ENCODE measurements at regions of chr12 and their contacts with region 1.

Region 1: DNA sequence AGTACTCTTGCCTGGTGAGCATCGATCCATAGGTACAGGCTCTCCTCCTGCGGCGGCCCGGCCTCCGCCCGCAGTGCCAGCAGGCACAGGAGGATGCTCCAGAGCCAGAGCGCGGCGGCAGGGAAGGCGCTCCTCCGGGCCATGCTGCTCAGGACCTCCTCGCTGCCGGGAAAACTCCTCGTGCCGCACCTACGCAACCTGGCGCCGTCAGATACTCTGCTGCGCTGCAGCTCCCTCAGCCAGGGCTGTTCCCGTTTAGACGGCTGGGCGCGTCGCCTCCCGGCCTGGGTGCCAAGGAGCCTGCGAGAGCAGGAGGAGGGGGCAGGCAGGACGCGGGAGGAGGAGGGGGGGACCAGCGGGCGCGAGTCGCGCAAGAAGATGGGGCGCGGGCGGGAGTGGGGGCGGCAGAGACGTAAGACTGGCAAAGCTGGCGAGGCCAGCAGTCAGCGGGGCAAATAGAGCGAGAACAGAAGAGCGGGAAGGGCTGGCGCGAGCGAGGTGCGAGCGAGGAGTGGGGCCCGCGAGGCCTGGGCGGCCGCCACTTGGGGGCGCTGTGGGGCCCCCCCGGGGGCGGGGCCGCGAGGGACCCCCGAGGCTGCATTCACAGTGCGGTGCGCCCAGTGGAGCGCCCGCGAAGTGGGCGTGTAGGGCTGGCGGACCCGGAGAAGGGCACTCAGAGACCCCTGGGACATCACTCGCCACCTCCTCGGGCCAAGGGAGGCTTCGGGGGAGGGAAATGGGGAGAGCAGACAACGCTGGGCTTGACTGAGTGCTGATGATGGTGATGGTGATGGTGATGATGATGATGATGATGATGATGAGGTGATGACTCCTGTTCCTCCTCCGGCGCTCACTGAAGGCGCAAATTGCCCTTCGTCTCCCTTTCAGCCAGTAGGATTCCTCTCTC is at the start of gene WIF1:
- DNase-seq: no peak
- H3K4me3 ChIP-seq: peak within 1 kb of the TSS in 3 of 4 donors; percentile 22 to 62 (median 41)
- H3K27ac ChIP-seq: no peak within 1 kb of the TSS
- H3K4me1 ChIP-seq: peaks cover 8 to 13% (median 8%) of the 10 kb centered on the region in 3 donors
- H3K27me3 ChIP-seq: peaks cover 0 to 96% (median 17%) of the 10 kb centered on the region in 4 donors
- CTCF ChIP-seq: peak in 1 of 6 experiments; percentile 6
- POLR2A ChIP-seq: no peak
- total RNA-seq, gene WIF1: 6.1 TPM in 1 of 4 donors, not detected in the others

Region 2: GRCh38 chr12:64699504-64700115 is 421.7 kb before region 1 on chr12:
- intact Hi-C with region 1: no loop called
- DNase-seq: no peak
- H3K4me3 ChIP-seq: no peak overlapping the region
- H3K27ac ChIP-seq: no peak overlapping the region
- H3K4me1 ChIP-seq: peaks cover 0 to 14% (median 0%) of the 10 kb centered on the region in 3 donors
- H3K27me3 ChIP-seq: no peaks in the 10 kb centered on the region
- CTCF ChIP-seq: no peak
- POLR2A ChIP-seq: no peak

Region 3: GRCh38 chr12:64890873-64891468 is 230.3 kb before region 1 on chr12:
- intact Hi-C with region 1: loop called (anchors 5 kb)
- DNase-seq: no peak
- H3K4me3 ChIP-seq: no peak overlapping the region
- H3K27ac ChIP-seq: no peak overlapping the region
- H3K4me1 ChIP-seq: no peaks in the 10 kb centered on the region
- H3K27me3 ChIP-seq: peaks cover 0 to 24% (median 0%) of the 10 kb centered on the region in 4 donors
- CTCF ChIP-seq: peak; percentile 45 to 88 (median 80)
- POLR2A ChIP-seq: no peak

Region 4: GRCh38 chr12:65597527-65597926 is 476.2 kb after region 1 on chr12:
- intact Hi-C with region 1: no loop called
- DNase-seq: no peak
- H3K4me3 ChIP-seq: no peak overlapping the region
- H3K27ac ChIP-seq: no peak overlapping the region
- H3K4me1 ChIP-seq: peaks cover 0 to 6% (median 4%) of the 10 kb centered on the region in 3 donors
- H3K27me3 ChIP-seq: peaks cover 0 to 29% (median 0%) of the 10 kb centered on the region in 4 donors
- CTCF ChIP-seq: no peak
- POLR2A ChIP-seq: no peak